Activated CD4-positive, alpha-beta memory T cell treated with anti-CD3 and anti-CD28 coated beads for 36 hours (primary cell): ENCODE measurements at regions of chr11 and their contacts with region 1.

Region 1: DNA sequence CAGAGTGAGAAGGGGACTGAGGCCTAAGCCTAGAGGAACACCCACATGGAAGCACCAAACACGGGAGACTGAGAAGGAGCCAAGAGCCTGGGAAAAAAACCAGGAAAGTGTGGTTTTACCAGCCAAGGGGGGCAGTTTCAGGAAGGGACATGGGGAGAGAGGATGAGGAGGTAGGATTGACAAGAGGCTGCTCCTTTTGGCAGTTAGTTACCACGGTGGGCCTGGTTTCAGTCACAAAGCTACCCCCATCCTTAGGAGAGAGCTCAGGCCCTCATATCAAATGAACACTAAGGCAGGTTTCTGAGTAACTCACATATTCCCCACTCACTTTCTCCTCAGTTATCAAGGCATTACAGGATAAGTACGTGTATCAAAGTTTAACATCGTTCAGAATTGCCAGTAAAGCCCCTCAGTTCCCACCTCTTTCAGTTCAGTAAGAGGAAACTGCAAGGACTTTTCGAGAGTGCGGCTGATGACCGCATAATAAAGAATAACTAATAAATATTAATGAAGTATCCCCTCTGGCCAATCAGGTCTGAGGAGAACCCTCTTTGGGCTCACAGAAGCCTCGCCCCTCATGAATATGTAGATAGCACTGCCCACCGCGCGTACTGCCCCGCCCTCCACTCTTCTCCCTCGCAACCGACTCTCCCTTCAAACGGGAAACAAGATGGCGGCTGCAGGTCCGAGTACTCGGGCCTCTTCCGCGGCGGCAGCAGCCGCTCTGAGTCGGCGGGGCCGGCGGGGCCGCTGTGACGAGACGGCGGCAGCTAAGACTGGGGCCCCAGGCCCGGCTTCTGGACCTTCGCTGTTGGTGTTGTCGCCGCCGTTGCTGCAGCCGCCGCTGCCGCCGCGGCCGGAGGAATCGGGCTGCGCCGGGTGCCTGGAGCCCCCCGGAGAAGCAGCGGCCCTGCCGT is at the start of gene RNF169:
- DNase-seq: peak; percentile 94
- H3K4me3 Mint-ChIP-seq: peak within 1 kb of the TSS; percentile 91
- H3K27ac Mint-ChIP-seq: peak within 1 kb of the TSS; percentile 74
- H3K4me1 Mint-ChIP-seq: peaks cover 33% of the 10 kb centered on the region
- H3K27me3 Mint-ChIP-seq: no peaks in the 10 kb centered on the region
- total RNA-seq, gene RNF169: 14.3 to 14.9 TPM

Region 2: GRCh38 chr11:74717221-74717969 is 31.1 kb before region 1 on chr11:
- CTCF ChIA-PET with region 1: no interaction called
- POLR2A ChIA-PET with region 1: no interaction called
- intact Hi-C with region 1: no loop called
- DNase-seq: no peak
- H3K4me3 Mint-ChIP-seq: no peak overlapping the region
- H3K27ac Mint-ChIP-seq: no peak overlapping the region
- H3K4me1 Mint-ChIP-seq: peaks cover 7% of the 10 kb centered on the region
- H3K27me3 Mint-ChIP-seq: no peaks in the 10 kb centered on the region

Region 3: GRCh38 chr11:74773481-74773880 is 25.0 kb after region 1 on chr11:
- CTCF ChIA-PET with region 1: no interaction called
- POLR2A ChIA-PET with region 1: interaction called, 4 read pairs
- intact Hi-C with region 1: loop called (anchors 1 kb)
- DNase-seq: no peak
- H3K4me3 Mint-ChIP-seq: no peak overlapping the region
- H3K27ac Mint-ChIP-seq: no peak overlapping the region
- H3K4me1 Mint-ChIP-seq: peaks cover 34% of the 10 kb centered on the region
- H3K27me3 Mint-ChIP-seq: no peaks in the 10 kb centered on the region

Region 4: DNA sequence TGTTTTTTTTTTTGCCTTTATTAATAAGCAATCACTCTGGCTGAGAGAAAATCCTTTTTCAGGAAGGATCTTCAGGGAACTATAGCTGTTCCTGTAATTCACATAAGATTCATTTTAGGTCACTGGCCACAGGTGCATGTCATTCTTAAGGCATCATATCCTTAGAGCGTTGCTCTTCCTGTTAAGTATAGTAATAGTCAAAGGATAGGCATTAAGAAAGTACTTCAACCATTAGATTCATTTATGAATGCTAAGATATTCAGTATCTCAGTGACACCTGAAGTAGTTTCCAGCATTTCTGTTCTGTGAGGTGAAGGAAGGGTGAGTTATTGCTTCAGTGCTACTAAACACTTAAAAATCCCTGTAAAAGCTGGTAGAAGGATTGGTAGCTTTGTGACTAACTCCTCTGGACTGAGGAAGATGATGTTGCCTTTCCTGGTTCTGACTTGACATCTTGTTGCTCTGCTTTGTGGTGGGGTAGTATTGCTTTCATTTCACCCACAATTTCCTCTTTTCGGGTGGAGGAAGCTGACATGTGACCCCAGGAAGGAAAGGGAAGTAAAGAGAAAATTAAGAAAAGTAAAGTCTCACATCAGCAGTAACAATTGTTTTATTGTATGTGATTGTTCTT is 34.9 kb after region 1 on chr11:
- CTCF ChIA-PET with region 1: no interaction called
- POLR2A ChIA-PET with region 1: interaction called, 3 read pairs
- intact Hi-C with region 1: loop called (anchors 2 kb)
- DNase-seq: peak; percentile 21
- H3K4me3 Mint-ChIP-seq: no peak overlapping the region
- H3K27ac Mint-ChIP-seq: no peak overlapping the region
- H3K4me1 Mint-ChIP-seq: peaks cover 24% of the 10 kb centered on the region
- H3K27me3 Mint-ChIP-seq: no peaks in the 10 kb centered on the region

Region 5: DNA sequence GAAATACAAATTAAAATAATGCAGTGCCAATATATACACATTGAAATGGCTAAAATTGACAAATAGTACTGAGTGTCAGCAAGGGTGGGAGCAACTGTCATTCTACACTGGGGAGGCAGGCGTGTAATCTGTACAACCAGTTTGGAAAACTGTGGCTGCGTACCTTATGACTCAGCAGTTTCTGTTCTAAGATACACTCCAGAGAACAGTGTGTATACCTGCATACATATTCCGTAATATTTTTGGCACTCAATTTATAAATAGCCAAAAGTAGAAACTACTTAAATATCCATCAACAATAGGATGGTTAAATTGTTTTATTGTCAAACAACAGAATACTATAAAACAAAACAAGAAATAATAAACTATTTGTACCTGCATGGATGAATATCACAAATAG is 57.8 kb after region 1 on chr11:
- CTCF ChIA-PET with region 1: no interaction called
- POLR2A ChIA-PET with region 1: no interaction called
- intact Hi-C with region 1: no loop called
- DNase-seq: no peak
- H3K4me3 Mint-ChIP-seq: no peak overlapping the region
- H3K27ac Mint-ChIP-seq: no peak overlapping the region
- H3K4me1 Mint-ChIP-seq: peaks cover 7% of the 10 kb centered on the region
- H3K27me3 Mint-ChIP-seq: no peaks in the 10 kb centered on the region